Lower lobe of right lung (tissue), 2 donors: ENCODE measurements at regions of chr18 and their contacts with region 1.

Region 1: DNA sequence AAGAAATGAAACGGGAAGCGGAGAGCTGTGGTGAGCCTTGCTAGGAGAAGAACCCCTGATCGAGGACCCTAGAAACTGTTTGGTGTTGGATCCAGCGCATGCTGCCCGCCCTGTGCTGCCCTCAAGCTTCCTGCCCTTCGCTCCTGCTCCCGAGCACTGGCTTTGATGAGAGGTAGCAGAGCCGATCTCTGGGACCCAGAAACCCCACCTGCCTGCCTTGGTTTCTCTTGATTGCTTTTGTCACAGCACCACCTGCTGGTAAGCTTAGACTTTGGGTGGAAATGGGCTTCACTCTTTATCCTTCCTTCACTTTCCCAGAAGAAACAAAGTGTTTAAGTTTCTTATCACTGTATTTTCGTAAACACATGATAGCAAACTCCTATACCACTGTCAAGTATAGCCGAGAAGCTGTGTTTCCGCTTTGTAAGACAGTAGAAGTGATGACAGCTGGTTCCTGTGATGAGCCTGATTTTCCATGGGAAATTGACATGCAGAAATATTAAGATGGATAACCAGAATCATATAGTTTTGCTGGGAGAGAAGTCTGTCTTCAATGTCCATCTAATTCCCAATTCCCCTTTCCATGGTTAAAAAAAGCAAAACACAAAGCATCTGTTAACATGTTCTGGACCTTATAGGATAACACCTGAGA is 267.4 kb downstream of the PHLPP1 start:
- DNase-seq: no peak
- ATAC-seq: peak; percentile 46 to 79
- H3K4me3 ChIP-seq: peak overlapping the region; percentile 43
- H3K27ac ChIP-seq: no peak overlapping the region
- H3K4me1 ChIP-seq: peaks cover 11% of the 10 kb centered on the region
- H3K27me3 ChIP-seq: no peaks in the 10 kb centered on the region
- CTCF ChIP-seq: peak; percentile 80

Region 2: DNA sequence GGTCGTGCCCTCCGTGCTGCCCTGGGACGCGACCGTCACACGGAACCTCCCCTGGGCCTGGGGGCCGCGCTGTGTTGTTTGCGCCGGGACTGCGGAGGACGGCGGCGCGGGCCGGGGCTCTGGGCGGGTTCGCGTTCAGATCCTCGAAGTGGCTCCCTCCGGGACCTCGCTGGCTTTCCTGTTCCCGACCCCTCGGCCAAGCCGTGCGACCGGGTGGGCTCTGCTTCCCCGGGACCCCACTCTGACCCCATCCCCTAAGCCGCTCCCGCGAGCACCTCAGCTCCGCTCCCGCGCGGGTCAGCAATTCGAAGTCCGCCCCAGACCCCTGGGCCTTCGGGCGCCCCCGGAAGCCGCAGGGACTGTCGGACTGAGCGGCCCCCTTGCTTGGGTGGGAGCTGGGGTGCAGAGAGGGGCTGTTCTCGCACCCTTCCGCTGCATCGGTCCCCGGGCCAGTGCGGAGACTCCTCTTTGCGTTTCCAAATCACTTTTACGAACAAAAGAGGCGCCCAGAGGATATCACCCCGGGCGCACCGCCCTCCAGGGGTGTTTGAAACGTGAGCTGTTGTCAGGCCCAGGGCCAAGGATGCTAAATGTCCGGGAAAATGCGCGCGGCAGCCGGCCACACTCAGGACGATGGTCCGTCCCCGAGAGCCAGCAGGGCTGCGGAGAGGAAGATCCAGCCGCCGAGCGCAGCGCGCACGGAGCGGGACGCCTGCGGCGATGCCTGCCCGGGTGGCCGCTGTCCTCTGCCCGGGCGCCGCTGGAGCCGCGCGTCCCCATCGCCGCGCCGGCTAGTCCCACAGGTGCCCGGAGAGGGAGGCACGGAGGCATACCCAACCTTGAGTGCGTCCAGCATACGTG is 386.4 kb before region 1 on chr18:
- intact Hi-C with region 1: loop called (anchors 10 kb)
- DNase-seq: no peak
- ATAC-seq: peak; percentile 46 to 57
- H3K4me3 ChIP-seq: peak overlapping the region; percentile 41
- H3K27ac ChIP-seq: no peak overlapping the region
- H3K4me1 ChIP-seq: peaks cover 11% of the 10 kb centered on the region
- H3K27me3 ChIP-seq: peaks cover 32% of the 10 kb centered on the region
- CTCF ChIP-seq: no peak

Region 3: GRCh38 chr18:63119647-63120046 is 136.9 kb after region 1 on chr18:
- intact Hi-C with region 1: no loop called
- DNase-seq: no peak
- ATAC-seq: no peak
- H3K4me3 ChIP-seq: no peak overlapping the region
- H3K27ac ChIP-seq: no peak overlapping the region
- H3K4me1 ChIP-seq: no peaks in the 10 kb centered on the region
- H3K27me3 ChIP-seq: no peaks in the 10 kb centered on the region
- CTCF ChIP-seq: peak; percentile 37